ENCODE measurements at regions of chr2 and their contacts with region 1.

Region 1: DNA sequence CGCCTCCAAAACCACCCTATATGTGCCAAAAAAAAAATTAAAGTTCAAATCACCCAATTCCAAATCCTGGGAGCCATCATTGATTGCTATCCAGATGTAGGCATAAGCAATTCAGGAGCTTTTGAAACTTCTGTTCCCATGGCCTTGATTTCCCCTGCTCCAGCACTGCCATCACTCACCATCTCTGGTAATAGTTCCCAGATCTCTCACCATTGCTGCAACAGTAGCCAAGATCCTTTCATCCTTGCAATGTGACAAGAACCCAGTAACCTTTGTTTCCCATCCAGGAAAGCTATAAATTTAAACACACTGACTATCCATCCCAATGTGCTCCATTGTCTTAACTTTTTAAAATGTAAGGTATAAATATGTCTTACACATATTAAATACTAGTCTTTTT is 155.4 kb downstream of the PDE11A start:
- DNase-seq: no peak
- H3K4me3 ChIP-seq: no peak overlapping the region
- H3K27ac ChIP-seq: no peak overlapping the region
- H3K27me3 ChIP-seq: no peaks in the 10 kb centered on the region
- CTCF ChIP-seq: no peak

Region 2: GRCh38 chr2:177852389-177852788 is 64.8 kb before region 1 on chr2:
- CTCF ChIA-PET with region 1: no interaction called
- POLR2A ChIA-PET with region 1: no interaction called
- DNase-seq: no peak
- H3K4me3 ChIP-seq: no peak overlapping the region
- H3K27ac ChIP-seq: no peak overlapping the region
- H3K27me3 ChIP-seq: no peaks in the 10 kb centered on the region
- CTCF ChIP-seq: no peak

Region 3: GRCh38 chr2:177906041-177906718 is 11.0 kb before region 1 on chr2:
- CTCF ChIA-PET with region 1: interaction called, 15 read pairs
- POLR2A ChIA-PET with region 1: no interaction called
- DNase-seq: peak; percentile 10
- H3K4me3 ChIP-seq: no peak overlapping the region
- H3K27ac ChIP-seq: no peak overlapping the region
- H3K27me3 ChIP-seq: no peaks in the 10 kb centered on the region
- CTCF ChIP-seq: peak; percentile 95

Region 4: GRCh38 chr2:178152033-178152432 is 234.9 kb after region 1 on chr2:
- CTCF ChIA-PET with region 1: no interaction called
- POLR2A ChIA-PET with region 1: no interaction called
- DNase-seq: no peak
- H3K4me3 ChIP-seq: no peak overlapping the region
- H3K27ac ChIP-seq: no peak overlapping the region
- H3K27me3 ChIP-seq: no peaks in the 10 kb centered on the region
- CTCF ChIP-seq: no peak

Measured in AG04450 (cell line).